Motor neuron (in vitro differentiated cells): ENCODE measurements at regions of chr1 and their contacts with region 1.

Region 1: DNA sequence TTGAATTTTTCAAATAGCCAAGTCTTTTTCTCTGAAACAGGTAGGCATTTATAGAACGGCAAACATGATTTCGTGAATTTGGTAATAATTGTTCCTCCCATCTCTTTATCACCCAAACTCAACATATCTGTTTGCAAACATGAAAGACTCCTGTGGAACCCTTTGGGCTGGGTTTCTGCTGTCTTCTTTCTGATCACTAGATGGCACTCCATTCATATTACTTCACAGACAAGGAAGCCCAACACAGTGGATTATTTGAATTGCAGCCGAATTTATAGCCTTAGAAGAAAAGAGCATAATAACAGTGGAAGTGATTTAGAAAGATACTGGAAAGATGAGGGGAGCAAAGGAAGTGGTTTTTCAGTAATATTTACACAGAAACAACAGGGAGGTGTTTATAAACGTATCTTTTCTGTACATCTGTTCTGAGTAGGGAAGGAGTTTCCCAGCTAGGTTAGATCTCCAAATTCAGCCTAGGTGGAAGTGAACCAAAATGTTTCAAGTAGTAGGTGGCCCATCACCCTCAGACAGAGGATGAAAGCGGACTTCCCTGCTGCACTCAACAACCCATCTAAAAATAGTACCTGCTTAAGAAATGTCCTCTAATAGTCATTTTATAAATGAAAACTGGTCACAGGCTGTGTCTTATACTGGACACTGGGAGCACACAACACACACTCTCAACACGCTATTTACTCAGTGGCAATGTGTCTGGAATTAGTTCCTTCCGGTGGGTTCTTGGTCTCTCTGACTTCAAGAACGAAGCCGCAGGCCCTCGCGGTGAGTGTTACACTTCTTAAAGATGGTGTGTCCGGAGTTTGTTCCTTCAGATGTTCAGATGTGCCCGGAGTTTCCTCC is 67.6 kb downstream of the MAP3K21 start:
- ATAC-seq: peak; percentile 64 to 91 (median 78)
- H3K4me3 ChIP-seq: no peak overlapping the region
- H3K27ac ChIP-seq: no peak overlapping the region
- H3K4me1 ChIP-seq: no peaks in the 10 kb centered on the region

Region 2: DNA sequence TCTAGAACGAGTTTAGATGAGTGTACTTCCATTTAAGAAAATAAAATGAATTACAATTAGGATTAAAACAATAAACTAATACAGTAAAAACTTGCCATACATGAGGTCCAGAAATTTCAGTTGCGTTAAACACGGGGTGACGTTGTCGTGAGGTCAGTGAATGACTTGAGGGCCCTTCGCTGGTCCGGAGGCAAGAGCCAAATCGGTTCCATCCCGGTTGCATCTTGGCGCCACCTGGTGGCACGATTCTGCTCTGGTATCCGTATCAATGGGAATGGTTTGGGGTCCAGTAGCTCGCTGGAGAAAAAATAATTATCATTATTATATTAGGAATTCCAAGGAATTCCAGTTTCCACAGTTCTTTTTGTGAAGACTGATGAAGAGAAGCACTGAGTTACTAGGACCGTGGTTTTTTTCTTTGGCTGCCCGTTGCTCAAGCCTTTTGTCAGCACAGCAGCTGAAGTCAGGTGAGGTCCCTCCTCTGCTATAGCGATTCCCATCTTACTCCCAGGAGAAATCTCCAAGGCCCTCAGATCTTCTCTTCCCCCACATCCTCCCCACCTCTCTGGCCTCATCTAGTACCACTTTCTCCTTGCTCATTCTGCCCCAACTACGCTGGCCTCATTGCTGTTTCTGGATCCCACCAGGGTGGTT is 670.8 kb after region 1 on chr1:
- in situ Hi-C with region 1: loop called in 2 of 9 experiments (anchors 25 kb)
- ATAC-seq: peak in 3 of 8 experiments; percentile 86 to 89 (median 88)
- H3K4me3 ChIP-seq: no peak overlapping the region
- H3K27ac ChIP-seq: no peak overlapping the region
- H3K4me1 ChIP-seq: peaks cover 0 to 5% of the 10 kb centered on the region in 2 donors